GM12878 (cell line): ENCODE measurements at regions of chr3 and their contacts with region 1.

Region 1: GRCh38 chr3:168100777-168101492 is 5.2 kb upstream of the GOLIM4 start:
- DNase-seq: no peak
- ATAC-seq: no peak
- H3K4me3 ChIP-seq: no peak overlapping the region
- H3K27ac ChIP-seq: no peak overlapping the region
- H3K4me1 ChIP-seq: no peaks in the 10 kb centered on the region
- H3K27me3 ChIP-seq: no peaks in the 10 kb centered on the region
- CTCF ChIP-seq: no peak
- EP300 ChIP-seq: no peak
- POLR2A ChIP-seq: no peak
- RAD21 ChIP-seq: no peak

Region 2: DNA sequence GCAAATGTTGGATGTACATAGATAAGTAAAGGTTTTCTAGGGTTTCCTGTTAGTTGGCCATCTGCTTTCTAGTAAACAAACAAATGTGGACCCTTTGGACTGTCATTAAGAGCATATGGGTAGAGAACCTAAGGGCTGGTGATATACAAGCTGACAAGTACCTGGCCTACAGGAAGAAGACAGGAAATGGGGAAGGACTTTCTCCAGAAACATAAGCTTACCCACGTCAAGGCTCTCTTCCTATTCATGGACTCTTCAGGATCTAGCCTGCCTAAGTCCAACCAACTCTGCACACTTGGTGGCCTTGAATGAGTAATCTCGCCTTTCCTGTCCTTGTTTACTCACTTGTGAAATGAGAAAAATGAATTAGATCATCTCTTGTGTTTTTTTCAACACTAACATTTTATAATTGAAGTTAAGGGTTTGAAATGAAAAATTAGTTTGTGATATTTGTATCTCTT is 16.9 kb after region 1 on chr3:
- CTCF ChIA-PET with region 1: interaction called, 5 read pairs
- POLR2A ChIA-PET with region 1: interaction called, 3 read pairs
- RAD21 ChIA-PET with region 1: no interaction called
- SMC1A ChIA-PET with region 1: interaction called, 12 read pairs
- in situ Hi-C with region 1: no loop called
- intact Hi-C with region 1: no loop called
- DNase-seq: no peak
- ATAC-seq: peak; percentile 61; the same call in 2 of the 3 replicates
- H3K4me3 ChIP-seq: no peak overlapping the region
- H3K27ac ChIP-seq: no peak overlapping the region
- H3K4me1 ChIP-seq: no peaks in the 10 kb centered on the region
- H3K27me3 ChIP-seq: no peaks in the 10 kb centered on the region
- CTCF ChIP-seq: no peak
- EP300 ChIP-seq: no peak
- POLR2A ChIP-seq: no peak
- RAD21 ChIP-seq: no peak